ENCODE measurements at regions of chr13 and their contacts with region 1.

Region 1: DNA sequence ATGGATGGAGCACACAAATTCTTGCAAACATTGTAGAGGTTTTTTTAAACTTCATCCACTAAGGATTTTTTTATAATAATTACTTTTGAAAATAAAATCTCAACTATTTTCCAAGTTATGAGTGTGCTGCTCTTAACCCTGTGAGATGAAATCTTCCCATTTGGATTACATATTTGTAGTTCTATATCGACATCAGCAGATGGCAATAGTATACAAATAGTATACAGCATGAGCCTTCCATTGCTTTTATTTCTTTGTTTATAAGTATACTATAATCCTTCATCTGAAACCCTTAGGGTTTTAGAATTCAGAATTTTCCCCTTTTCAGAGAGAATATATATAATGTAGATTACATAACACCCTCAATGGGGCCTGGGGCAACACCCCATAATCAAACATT is 70.5 kb downstream of the GJA3 start:
- DNase-seq: no peak
- ATAC-seq: peak in 2 of 8 donors; percentile 52 to 53
- H3K4me3 ChIP-seq: no peak overlapping the region
- H3K27ac ChIP-seq: no peak overlapping the region
- H3K4me1 ChIP-seq: peaks cover 0 to 14% (median 0%) of the 10 kb centered on the region in 9 donors
- H3K27me3 ChIP-seq: no peaks in the 10 kb centered on the region
- CTCF ChIP-seq: peak in 4 of 9 donors; percentile 29 to 48 (median 38)

Region 2: GRCh38 chr13:20127577-20128466 is 37.5 kb after region 1 on chr13:
- intact Hi-C with region 1: loop called in 1 of 10 experiments (anchors 2 kb)
- DNase-seq: peak; percentile 69 to 78
- ATAC-seq: peak; percentile 82 to 88 (median 84)
- H3K4me3 ChIP-seq: peak overlapping the region; percentile 30 to 73 (median 64)
- H3K27ac ChIP-seq: peak overlapping the region; percentile 78 to 97 (median 94)
- H3K4me1 ChIP-seq: peaks cover 5 to 57% (median 35%) of the 10 kb centered on the region in 9 donors
- H3K27me3 ChIP-seq: peaks cover 0 to 42% (median 15%) of the 10 kb centered on the region in 7 donors
- CTCF ChIP-seq: peak; percentile 17 to 74 (median 43)

Measured in heart right ventricle (tissue), 16 donors.